ENCODE measurements at regions of chr15 and their contacts with region 1.

Region 1: GRCh38 chr15:57505949-57506391 is 85.7 kb upstream of the MYZAP start:
- DNase-seq: no peak
- H3K4me3 ChIP-seq: no peak overlapping the region
- H3K27ac ChIP-seq: no peak overlapping the region
- H3K4me1 ChIP-seq: peaks cover 0 to 8% (median 5%) of the 10 kb centered on the region in 4 experiments
- H3K27me3 ChIP-seq: no peaks in the 10 kb centered on the region
- CTCF ChIP-seq: no peak
- EP300 ChIP-seq: no peak
- POLR2A ChIP-seq: no peak
- RAD21 ChIP-seq: no peak

Region 2: DNA sequence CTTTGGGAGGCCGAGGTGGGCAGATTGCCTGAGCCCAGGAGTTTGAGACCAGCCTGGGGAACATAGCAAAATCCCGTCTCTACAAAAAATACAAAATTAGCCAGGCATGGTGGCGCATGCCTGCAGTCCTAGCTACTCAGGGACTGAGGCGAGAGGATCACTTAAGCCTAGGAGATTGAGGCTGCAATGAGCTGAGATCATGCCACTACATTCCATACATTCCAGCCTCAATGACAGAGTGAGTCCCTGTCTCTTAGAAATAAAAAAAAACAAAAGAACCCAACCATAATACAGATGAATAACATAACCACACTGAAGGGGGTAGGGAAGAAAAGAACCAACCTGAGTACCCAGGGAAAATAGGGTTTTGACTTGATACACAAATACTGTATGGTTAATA is 149.3 kb before region 1 on chr15:
- CTCF ChIA-PET with region 1: interaction called, 38 read pairs
- POLR2A ChIA-PET with region 1: no interaction called
- DNase-seq: no peak
- H3K4me3 ChIP-seq: peak overlapping the region in 1 of 4 experiments; percentile 11; a peak in 1 of 8 replicates
- H3K27ac ChIP-seq: 0 out of 2 replicates have a peak overlapping the region, but pooled peaks have one; percentile 8
- H3K4me1 ChIP-seq: peaks cover 2 to 28% (median 13%) of the 10 kb centered on the region in 4 experiments; a peak in 5 of 7 replicates
- H3K27me3 ChIP-seq: no peaks in the 10 kb centered on the region
- CTCF ChIP-seq: no peak
- EP300 ChIP-seq: no peak
- POLR2A ChIP-seq: no peak; a peak in 1 of 3 replicates
- RAD21 ChIP-seq: no peak

Region 3: DNA sequence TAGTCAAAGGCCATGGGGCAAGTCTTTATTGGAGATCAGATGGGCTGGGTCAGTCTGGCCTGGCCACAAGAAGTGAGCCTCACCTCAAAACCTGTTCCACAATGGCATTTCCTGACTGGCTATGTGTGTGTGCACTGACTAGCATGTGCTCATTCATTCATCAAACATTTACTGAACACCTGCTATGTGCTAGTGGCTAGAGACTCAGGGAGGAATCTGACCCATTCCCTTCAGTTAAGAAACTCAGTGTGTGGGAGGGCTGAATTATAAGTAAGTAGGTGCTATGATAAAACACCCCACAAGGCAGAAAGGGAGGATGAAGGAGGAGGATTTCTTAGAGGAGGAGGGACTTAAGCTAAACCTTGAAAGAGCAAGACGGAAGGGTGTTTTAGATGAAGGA is 135.0 kb before region 1 on chr15:
- CTCF ChIA-PET with region 1: interaction called, 10 read pairs
- POLR2A ChIA-PET with region 1: interaction called, 3 read pairs
- DNase-seq: no peak
- H3K4me3 ChIP-seq: no peak overlapping the region
- H3K27ac ChIP-seq: no peak overlapping the region
- H3K4me1 ChIP-seq: peaks cover 0 to 13% (median 10%) of the 10 kb centered on the region in 4 experiments; a peak in 5 of 7 replicates
- H3K27me3 ChIP-seq: peaks cover 0 to 5% (median 2%) of the 10 kb centered on the region in 4 experiments; a peak in 2 of 7 replicates
- CTCF ChIP-seq: no peak
- EP300 ChIP-seq: no peak
- POLR2A ChIP-seq: no peak
- RAD21 ChIP-seq: no peak

Region 4: GRCh38 chr15:57472861-57473260 is 33.1 kb before region 1 on chr15:
- CTCF ChIA-PET with region 1: interaction called, 16 read pairs
- POLR2A ChIA-PET with region 1: no interaction called
- DNase-seq: no peak
- H3K4me3 ChIP-seq: no peak overlapping the region
- H3K27ac ChIP-seq: no peak overlapping the region
- H3K4me1 ChIP-seq: peaks cover 3 to 13% (median 6%) of the 10 kb centered on the region in 4 experiments; a peak in 6 of 7 replicates
- H3K27me3 ChIP-seq: no peaks in the 10 kb centered on the region
- CTCF ChIP-seq: no peak
- EP300 ChIP-seq: no peak
- POLR2A ChIP-seq: no peak
- RAD21 ChIP-seq: no peak

Region 5: GRCh38 chr15:57485869-57486268 is 20.1 kb before region 1 on chr15:
- CTCF ChIA-PET with region 1: interaction called, 114 read pairs
- POLR2A ChIA-PET with region 1: no interaction called
- DNase-seq: peak in 1 of 2 experiments; percentile 68
- H3K4me3 ChIP-seq: no peak overlapping the region
- H3K27ac ChIP-seq: no peak overlapping the region
- H3K4me1 ChIP-seq: peaks cover 0 to 6% (median 2%) of the 10 kb centered on the region in 4 experiments; a peak in 4 of 7 replicates
- H3K27me3 ChIP-seq: no peaks in the 10 kb centered on the region
- CTCF ChIP-seq: no peak
- EP300 ChIP-seq: no peak
- POLR2A ChIP-seq: no peak
- RAD21 ChIP-seq: no peak

Region 6: GRCh38 chr15:57522148-57522547 is 16.2 kb after region 1 on chr15:
- CTCF ChIA-PET with region 1: interaction called, 48 read pairs
- POLR2A ChIA-PET with region 1: no interaction called
- DNase-seq: no peak
- H3K4me3 ChIP-seq: no peak overlapping the region
- H3K27ac ChIP-seq: no peak overlapping the region
- H3K4me1 ChIP-seq: peaks cover 0 to 2% (median 0%) of the 10 kb centered on the region in 4 experiments; a peak in 1 of 7 replicates
- H3K27me3 ChIP-seq: no peaks in the 10 kb centered on the region
- CTCF ChIP-seq: no peak
- EP300 ChIP-seq: no peak
- POLR2A ChIP-seq: no peak
- RAD21 ChIP-seq: no peak

Region 7: GRCh38 chr15:57541805-57542504 is 36.0 kb after region 1 on chr15:
- CTCF ChIA-PET with region 1: interaction called, 13 read pairs
- POLR2A ChIA-PET with region 1: no interaction called
- DNase-seq: peak in 1 of 2 experiments; percentile 83
- H3K4me3 ChIP-seq: no peak overlapping the region
- H3K27ac ChIP-seq: no peak overlapping the region
- H3K4me1 ChIP-seq: 0 out of 7 replicates have a peak, but pooled peaks cover 0 to 1% (median 0%) of the 10 kb centered on the region in 4 experiments
- H3K27me3 ChIP-seq: no peaks in the 10 kb centered on the region
- CTCF ChIP-seq: peak; percentile 63 to 85 (median 70)
- EP300 ChIP-seq: no peak
- POLR2A ChIP-seq: no peak
- RAD21 ChIP-seq: peak; percentile 56 to 65

Region 8: DNA sequence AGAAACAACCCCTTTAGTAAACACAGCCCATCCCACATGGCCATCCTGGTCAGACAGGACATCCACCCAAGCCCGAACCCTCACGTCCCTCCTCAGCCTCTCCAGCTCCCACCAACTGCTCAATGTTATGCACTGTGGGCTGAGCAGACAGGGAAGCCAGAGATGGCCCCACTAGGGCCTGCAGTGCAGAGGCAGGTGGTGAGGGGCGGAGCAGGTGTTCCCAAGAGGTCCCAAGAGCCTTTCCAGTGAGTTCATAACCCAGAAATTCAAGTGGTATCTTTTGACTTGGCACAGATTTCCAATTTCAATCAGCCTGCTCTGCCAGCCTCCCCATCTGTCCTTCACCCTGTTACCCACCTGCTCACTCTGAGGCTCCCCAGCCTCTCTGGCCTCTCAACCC is 1056.2 kb after region 1 on chr15:
- CTCF ChIA-PET with region 1: no interaction called
- POLR2A ChIA-PET with region 1: no interaction called
- DNase-seq: no peak
- H3K4me3 ChIP-seq: no peak overlapping the region
- H3K27ac ChIP-seq: no peak overlapping the region
- H3K4me1 ChIP-seq: no peaks in the 10 kb centered on the region; a peak in 1 of 7 replicates
- H3K27me3 ChIP-seq: no peaks in the 10 kb centered on the region
- CTCF ChIP-seq: no peak
- EP300 ChIP-seq: no peak
- POLR2A ChIP-seq: no peak
- RAD21 ChIP-seq: no peak